GM12878 (cell line): ENCODE measurements at regions of chr11 and their contacts with region 1.

Region 1: DNA sequence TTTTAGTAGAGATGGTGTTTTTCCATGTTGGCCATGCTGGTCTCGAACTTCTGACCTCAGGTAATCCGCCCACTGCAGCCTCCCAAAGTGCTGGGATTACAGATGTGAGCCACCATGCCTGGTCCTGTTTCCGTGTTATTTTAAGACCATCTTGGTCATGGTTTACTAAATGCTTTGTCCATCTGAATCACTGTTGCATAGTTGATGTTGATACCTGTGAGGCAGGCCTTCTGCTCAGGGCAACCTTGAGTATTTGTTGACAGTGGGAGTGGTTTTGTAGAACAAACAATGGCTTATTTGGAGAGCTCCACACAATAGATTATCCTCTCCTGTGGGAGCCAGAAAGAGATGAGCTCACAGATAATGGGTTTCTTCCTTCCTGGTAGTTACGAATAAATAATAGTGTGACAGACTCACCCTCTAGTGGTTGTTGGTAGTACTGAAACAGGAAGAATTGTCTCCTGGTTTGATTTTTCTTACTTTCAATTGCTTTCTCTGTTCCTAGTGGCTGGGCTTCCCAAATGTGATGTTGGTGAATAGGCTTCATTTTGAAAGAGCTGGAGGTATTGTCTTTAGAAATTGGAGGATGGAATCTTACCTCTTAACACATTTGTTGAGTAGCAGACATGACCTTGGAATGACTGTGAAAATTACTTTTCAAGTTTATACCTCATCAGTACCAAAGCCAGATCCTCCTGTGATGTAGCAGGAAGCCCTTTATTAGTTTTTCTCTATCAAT is 39.0 kb downstream of the CTNND1 start:
- DNase-seq: peak; percentile 56
- ATAC-seq: peak; percentile 95
- H3K4me3 ChIP-seq: no peak overlapping the region
- H3K27ac ChIP-seq: no peak overlapping the region
- H3K4me1 ChIP-seq: no peaks in the 10 kb centered on the region; the same call in 1 of the 2 replicates
- H3K27me3 ChIP-seq: no peaks in the 10 kb centered on the region
- CTCF ChIP-seq: peak; percentile 75 to 92 (median 83)
- EP300 ChIP-seq: no peak
- POLR2A ChIP-seq: no peak
- RAD21 ChIP-seq: peak; percentile 93

Region 2: DNA sequence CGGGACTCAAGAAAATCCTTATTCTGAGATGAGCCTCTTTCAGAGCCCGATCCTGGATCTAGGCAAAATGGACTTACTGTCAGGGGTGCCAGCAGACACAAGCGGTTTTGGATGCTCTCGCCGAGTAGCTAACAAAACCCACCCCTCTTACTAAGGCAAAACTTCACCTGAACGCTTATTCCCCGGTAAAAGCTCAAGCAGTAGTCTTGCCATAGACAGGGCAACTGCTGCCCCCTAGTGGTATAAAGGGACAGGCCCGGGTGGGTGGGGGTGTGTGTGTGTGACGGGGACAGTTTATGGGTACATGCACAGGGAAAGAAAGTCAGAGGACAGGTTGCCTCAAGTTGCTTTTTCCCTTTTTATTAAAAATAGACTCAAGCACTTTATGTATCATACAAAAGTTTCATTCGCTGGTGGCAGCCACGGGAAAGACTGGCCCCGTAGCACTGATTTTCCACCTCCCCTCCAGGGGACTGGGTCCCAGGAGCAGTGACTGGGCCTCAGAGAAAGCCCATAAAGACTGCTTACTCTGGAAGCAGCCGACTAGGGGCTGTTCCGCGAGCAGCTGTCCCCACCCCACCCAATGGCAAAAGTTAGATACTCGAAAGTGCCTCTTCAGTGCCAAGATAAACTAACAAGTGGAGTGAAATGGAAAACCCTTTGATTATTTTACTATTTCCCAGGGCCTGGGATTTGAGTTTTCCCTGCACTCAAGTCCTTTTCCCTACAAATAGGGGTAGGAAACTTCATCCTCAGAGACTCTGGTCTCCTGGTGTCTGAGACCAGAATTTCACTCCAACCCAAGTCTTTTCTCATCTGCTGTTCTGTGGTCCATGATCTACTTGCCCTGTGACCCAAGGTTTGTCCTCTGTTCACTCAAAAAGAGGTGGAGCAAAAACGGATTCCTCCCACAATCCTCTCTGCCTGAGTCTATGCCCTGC is 155.6 kb before region 1 on chr11:
- CTCF ChIA-PET with region 1: interaction called, 36 read pairs
- POLR2A ChIA-PET with region 1: no interaction called
- RAD21 ChIA-PET with region 1: interaction called, 18 read pairs
- SMC1A ChIA-PET with region 1: interaction called, 11 read pairs
- in situ Hi-C with region 1: no loop called
- intact Hi-C with region 1: no loop called
- DNase-seq: no peak
- ATAC-seq: peak; percentile 85
- H3K4me3 ChIP-seq: no peak overlapping the region
- H3K27ac ChIP-seq: no peak overlapping the region
- H3K4me1 ChIP-seq: peaks cover 12% of the 10 kb centered on the region
- H3K27me3 ChIP-seq: peaks cover 10 to 17% of the 10 kb centered on the region in 2 experiments
- CTCF ChIP-seq: peak; percentile 73 to 85 (median 85)
- EP300 ChIP-seq: no peak
- POLR2A ChIP-seq: no peak
- RAD21 ChIP-seq: peak; percentile 93

Region 3: GRCh38 chr11:57698843-57699365 is 101.7 kb before region 1 on chr11:
- CTCF ChIA-PET with region 1: interaction called, 11 read pairs
- POLR2A ChIA-PET with region 1: no interaction called
- RAD21 ChIA-PET with region 1: interaction called, 12 read pairs
- SMC1A ChIA-PET with region 1: interaction called, 7 read pairs
- in situ Hi-C with region 1: no loop called
- intact Hi-C with region 1: no loop called
- DNase-seq: no peak
- ATAC-seq: no peak; the same call in 2 of the 3 replicates
- H3K4me3 ChIP-seq: no peak overlapping the region
- H3K27ac ChIP-seq: no peak overlapping the region
- H3K4me1 ChIP-seq: no peaks in the 10 kb centered on the region
- H3K27me3 ChIP-seq: no peaks in the 10 kb centered on the region
- CTCF ChIP-seq: no peak
- EP300 ChIP-seq: no peak
- POLR2A ChIP-seq: peak; percentile 61
- RAD21 ChIP-seq: no peak

Region 4: DNA sequence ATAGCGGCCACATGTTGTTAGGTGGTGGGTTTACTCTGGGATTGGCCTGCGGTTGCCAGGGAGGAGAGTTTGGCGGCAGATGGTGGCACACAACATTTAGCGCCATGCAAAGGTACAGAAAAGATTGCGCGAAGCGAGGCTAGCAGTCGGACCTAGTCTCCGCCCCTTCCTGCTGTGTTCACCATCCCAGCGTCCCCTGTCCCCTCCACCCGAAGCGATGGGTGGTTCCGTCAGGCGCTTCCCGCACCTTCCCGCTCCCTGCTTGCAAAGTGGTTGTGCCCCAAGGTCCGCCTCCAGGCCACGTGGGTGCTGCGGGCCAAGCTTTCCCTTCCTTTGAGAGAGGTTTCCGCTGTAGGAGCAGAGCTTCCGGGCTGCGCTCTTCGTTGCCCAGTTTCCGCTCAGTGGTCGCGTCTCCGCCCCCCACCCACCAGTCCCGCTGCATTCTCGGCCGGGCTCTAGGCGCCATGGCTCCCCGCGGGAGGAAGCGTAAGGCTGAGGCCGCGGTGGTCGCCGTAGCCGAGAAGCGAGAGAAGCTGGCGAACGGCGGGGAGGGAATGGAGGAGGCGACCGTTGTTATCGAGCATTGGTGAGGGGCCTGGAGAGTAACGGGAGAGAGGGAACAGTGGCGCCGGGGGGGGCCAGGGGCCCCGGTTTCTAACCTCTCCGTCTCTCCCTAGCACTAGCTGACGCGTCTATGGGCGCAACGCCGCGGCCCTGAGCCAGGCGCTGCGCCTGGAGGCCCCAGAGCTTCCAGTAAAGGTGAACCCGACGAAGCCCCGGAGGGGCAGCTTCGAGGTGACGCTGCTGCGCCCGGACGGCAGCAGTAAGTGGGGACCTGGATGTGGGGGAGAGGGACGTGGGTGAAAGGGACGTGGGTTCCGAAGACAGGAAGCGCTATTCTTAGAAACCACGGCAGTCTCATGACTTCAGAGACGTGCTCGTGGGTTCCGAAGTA is 59.2 kb before region 1 on chr11 and contains the start of gene SELENOH:
- CTCF ChIA-PET with region 1: interaction called, 227 read pairs
- POLR2A ChIA-PET with region 1: interaction called, 6 read pairs
- RAD21 ChIA-PET with region 1: interaction called, 25 read pairs
- SMC1A ChIA-PET with region 1: interaction called, 83 read pairs
- in situ Hi-C with region 1: no loop called
- intact Hi-C with region 1: no loop called
- DNase-seq: peak; percentile 95
- ATAC-seq: peak; percentile 95
- H3K4me3 ChIP-seq: peak within 1 kb of the TSS; percentile 95
- H3K27ac ChIP-seq: peak within 1 kb of the TSS; percentile 96
- H3K4me1 ChIP-seq: no peaks in the 10 kb centered on the region
- H3K27me3 ChIP-seq: no peaks in the 10 kb centered on the region
- CTCF ChIP-seq: no peak
- EP300 ChIP-seq: peak in 1 of 2 experiments; percentile 51; a peak in 1 of 4 replicates
- POLR2A ChIP-seq: peak; percentile 99
- RAD21 ChIP-seq: no peak
- polyA plus RNA-seq, gene SELENOH: 20.3 to 101 TPM

Region 5: DNA sequence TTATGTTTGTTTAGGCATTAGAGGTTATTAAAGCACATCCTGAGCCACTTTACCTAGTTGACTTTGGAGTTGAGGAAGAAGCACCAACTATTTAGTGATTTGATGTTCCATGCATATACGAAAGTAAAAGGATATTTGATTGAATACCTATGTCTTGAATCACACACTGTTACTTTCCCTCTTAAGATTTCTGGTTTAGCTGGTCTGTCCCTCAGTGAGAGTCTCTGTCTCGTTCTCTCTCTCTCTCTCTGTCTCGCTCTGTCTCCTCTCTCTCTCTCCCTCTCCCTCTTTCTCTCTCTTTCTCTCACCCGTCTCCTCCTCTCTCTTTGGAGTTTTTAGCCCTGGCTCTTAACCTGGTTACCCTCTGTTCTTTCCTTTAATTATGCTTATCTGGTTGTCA is 28.1 kb before region 1 on chr11:
- CTCF ChIA-PET with region 1: interaction called, 69 read pairs
- POLR2A ChIA-PET with region 1: interaction called, 4 read pairs
- RAD21 ChIA-PET with region 1: interaction called, 141 read pairs
- SMC1A ChIA-PET with region 1: interaction called, 197 read pairs
- in situ Hi-C with region 1: no loop called
- intact Hi-C with region 1: no loop called
- DNase-seq: no peak
- ATAC-seq: peak; percentile 9; the same call in 1 of the 3 replicates
- H3K4me3 ChIP-seq: no peak overlapping the region
- H3K27ac ChIP-seq: no peak overlapping the region
- H3K4me1 ChIP-seq: peaks cover 11% of the 10 kb centered on the region
- H3K27me3 ChIP-seq: no peaks in the 10 kb centered on the region
- CTCF ChIP-seq: no peak
- EP300 ChIP-seq: no peak
- POLR2A ChIP-seq: no peak
- RAD21 ChIP-seq: no peak

Region 6: GRCh38 chr11:57815476-57815875 is 14.9 kb after region 1 on chr11:
- CTCF ChIA-PET with region 1: interaction called, 10 read pairs
- POLR2A ChIA-PET with region 1: no interaction called
- RAD21 ChIA-PET with region 1: interaction called, 7 read pairs
- SMC1A ChIA-PET with region 1: interaction called, 5 read pairs
- in situ Hi-C with region 1: no loop called
- intact Hi-C with region 1: no loop called
- DNase-seq: no peak
- ATAC-seq: peak; percentile 82
- H3K4me3 ChIP-seq: no peak overlapping the region
- H3K27ac ChIP-seq: peak overlapping the region; percentile 51
- H3K4me1 ChIP-seq: peaks cover 10% of the 10 kb centered on the region; the same call in 1 of the 2 replicates
- H3K27me3 ChIP-seq: no peaks in the 10 kb centered on the region
- CTCF ChIP-seq: no peak
- EP300 ChIP-seq: peak in 1 of 2 experiments; percentile 52; a peak in 1 of 4 replicates
- POLR2A ChIP-seq: no peak
- RAD21 ChIP-seq: no peak

Region 7: GRCh38 chr11:57842873-57843272 is 42.3 kb after region 1 on chr11:
- CTCF ChIA-PET with region 1: no interaction called
- POLR2A ChIA-PET with region 1: no interaction called
- RAD21 ChIA-PET with region 1: no interaction called
- SMC1A ChIA-PET with region 1: no interaction called
- in situ Hi-C with region 1: no loop called
- intact Hi-C with region 1: no loop called
- DNase-seq: no peak
- ATAC-seq: no peak
- H3K4me3 ChIP-seq: no peak overlapping the region
- H3K27ac ChIP-seq: no peak overlapping the region
- H3K4me1 ChIP-seq: no peaks in the 10 kb centered on the region
- H3K27me3 ChIP-seq: no peaks in the 10 kb centered on the region
- CTCF ChIP-seq: no peak
- EP300 ChIP-seq: no peak
- POLR2A ChIP-seq: no peak
- RAD21 ChIP-seq: no peak